Endothelial cell of umbilical vein (primary cell): ENCODE measurements at regions of chr3 and their contacts with region 1.

Region 1: GRCh38 chr3:177359593-177360357 is 162.5 kb upstream of the TBL1XR1 start:
- DNase-seq: peak; percentile 98
- H3K4me3 ChIP-seq: peak overlapping the region in 2 of 3 experiments; percentile 16 to 43
- H3K27ac ChIP-seq: peak overlapping the region; percentile 98
- H3K4me1 ChIP-seq: peaks cover 50% of the 10 kb centered on the region
- H3K27me3 ChIP-seq: no peaks in the 10 kb centered on the region
- CTCF ChIP-seq: no peak
- POLR2A ChIP-seq: no peak

Region 2: DNA sequence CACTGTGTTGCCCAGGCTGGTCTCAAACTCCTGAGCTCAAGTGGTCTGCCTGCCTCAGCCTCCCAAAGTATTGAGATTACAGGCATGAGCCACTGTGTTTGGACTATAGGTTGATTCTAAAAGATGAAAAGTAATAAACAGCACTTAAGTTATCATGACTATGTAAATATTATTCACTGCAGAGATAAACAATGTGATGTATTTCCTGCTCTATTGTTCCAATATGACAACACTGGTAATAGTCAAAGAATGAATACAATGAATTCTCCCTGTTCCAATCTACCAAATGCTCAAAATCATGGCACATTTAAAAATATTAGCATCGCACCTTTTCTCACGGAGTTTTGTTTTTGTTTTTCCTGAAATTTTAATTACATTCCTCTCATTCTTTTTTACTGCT is 125.7 kb before region 1 on chr3:
- CTCF ChIA-PET with region 1: no interaction called
- POLR2A ChIA-PET with region 1: no interaction called
- dilution Hi-C with region 1: no loop called
- intact Hi-C with region 1: loop called (anchors 1 kb)
- DNase-seq: peak; percentile 55
- H3K4me3 ChIP-seq: no peak overlapping the region
- H3K27ac ChIP-seq: peak overlapping the region; percentile 37
- H3K4me1 ChIP-seq: peaks cover 7% of the 10 kb centered on the region
- H3K27me3 ChIP-seq: no peaks in the 10 kb centered on the region
- CTCF ChIP-seq: no peak
- POLR2A ChIP-seq: no peak

Region 3: DNA sequence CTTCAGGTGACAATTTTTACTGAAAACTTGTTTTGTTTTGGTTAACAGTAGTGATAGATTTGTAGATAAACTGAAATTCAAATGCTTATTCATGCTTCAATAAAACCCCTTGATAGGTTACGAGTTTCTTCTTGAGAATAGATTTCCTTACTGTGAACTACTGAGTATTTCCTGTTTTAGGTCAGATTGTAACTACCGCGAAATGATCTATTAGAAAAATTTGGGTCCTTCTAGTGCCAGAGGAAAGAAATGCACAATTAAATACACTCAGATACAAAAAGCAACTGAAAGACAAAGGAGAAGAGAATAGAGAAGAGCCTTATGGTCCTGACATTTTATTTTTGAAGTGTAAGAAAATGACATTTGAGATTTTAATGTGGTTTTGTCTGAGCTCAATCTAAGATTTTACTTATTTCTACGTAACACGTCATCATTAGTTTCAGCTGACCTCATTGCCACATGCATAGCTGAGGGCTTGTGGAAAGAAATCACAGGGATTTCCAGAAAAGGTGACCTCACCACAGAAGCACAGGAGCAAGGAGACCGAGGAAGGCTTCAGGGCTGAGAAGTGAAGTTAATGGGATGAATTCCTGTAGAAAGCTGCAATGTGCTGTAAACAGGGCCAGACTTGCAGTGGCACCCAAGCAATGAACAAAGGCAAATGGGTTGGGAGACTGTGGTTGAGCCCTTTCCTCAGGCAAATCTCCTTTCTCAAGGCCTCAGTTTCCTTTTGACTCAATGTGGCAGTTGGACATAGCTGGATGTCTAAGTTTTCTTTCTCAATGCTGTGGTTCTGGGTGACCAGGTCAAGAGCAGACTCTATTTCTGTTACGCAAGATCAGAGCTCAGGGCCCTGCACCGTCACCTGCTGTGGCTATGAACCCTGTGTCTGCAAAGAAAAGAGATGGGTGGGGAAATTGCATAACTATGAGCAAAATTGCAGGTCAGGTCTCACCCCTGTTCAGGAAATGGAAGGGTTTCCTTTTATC is 89.5 kb after region 1 on chr3:
- CTCF ChIA-PET with region 1: no interaction called
- POLR2A ChIA-PET with region 1: no interaction called
- dilution Hi-C with region 1: no loop called
- intact Hi-C with region 1: loop called (anchors 1 kb)
- DNase-seq: no peak
- H3K4me3 ChIP-seq: no peak overlapping the region
- H3K27ac ChIP-seq: no peak overlapping the region
- H3K4me1 ChIP-seq: peaks cover 23% of the 10 kb centered on the region
- H3K27me3 ChIP-seq: no peaks in the 10 kb centered on the region
- CTCF ChIP-seq: no peak
- POLR2A ChIP-seq: no peak

Region 4: DNA sequence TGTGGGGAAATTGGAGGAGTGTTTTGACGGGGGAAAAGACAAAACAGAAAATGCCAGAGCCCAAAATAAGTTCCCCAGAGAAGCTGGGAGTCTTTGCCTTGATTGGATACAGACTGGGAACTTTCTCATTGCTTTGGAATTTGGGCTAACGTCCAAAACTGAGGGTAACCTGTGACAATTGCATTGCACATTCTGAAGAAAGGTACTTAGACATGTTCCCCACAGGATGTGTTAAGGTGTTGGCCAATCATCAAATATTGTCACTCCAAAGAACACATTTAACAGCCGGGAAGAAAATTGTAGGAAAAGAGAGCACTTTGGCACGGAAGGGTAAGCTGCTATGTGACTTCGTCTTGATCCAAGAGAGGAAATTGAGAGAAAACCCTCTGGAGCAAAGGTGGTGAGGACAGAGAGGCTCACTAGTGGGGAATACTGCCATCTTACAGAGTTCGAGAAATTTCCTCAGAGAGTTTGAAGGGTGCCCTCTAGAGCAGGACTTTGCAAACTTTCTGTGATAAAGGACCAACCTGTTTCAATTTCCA is 457.0 kb after region 1 on chr3:
- CTCF ChIA-PET with region 1: interaction called, 3 read pairs
- POLR2A ChIA-PET with region 1: no interaction called
- dilution Hi-C with region 1: no loop called
- intact Hi-C with region 1: loop called (anchors 10 kb)
- DNase-seq: peak; percentile 62
- H3K4me3 ChIP-seq: no peak overlapping the region
- H3K27ac ChIP-seq: no peak overlapping the region
- H3K4me1 ChIP-seq: peaks cover 18% of the 10 kb centered on the region
- H3K27me3 ChIP-seq: no peaks in the 10 kb centered on the region
- CTCF ChIP-seq: no peak
- POLR2A ChIP-seq: no peak

Region 5: GRCh38 chr3:178170698-178171535 is 811.1 kb after region 1 on chr3:
- CTCF ChIA-PET with region 1: interaction called, 5 read pairs
- POLR2A ChIA-PET with region 1: no interaction called
- dilution Hi-C with region 1: no loop called
- intact Hi-C with region 1: loop called (anchors 1 kb)
- DNase-seq: peak; percentile 96
- H3K4me3 ChIP-seq: no peak overlapping the region
- H3K27ac ChIP-seq: peak overlapping the region; percentile 85
- H3K4me1 ChIP-seq: peaks cover 27% of the 10 kb centered on the region
- H3K27me3 ChIP-seq: no peaks in the 10 kb centered on the region
- CTCF ChIP-seq: no peak
- POLR2A ChIP-seq: peak; percentile 91

Region 6: GRCh38 chr3:178385280-178385952 is 1025.6 kb after region 1 on chr3:
- CTCF ChIA-PET with region 1: interaction called, 15 read pairs
- POLR2A ChIA-PET with region 1: no interaction called
- dilution Hi-C with region 1: no loop called
- intact Hi-C with region 1: loop called (anchors 1 kb)
- DNase-seq: peak; percentile 71
- H3K4me3 ChIP-seq: no peak overlapping the region
- H3K27ac ChIP-seq: no peak overlapping the region
- H3K4me1 ChIP-seq: peaks cover 35% of the 10 kb centered on the region
- H3K27me3 ChIP-seq: no peaks in the 10 kb centered on the region
- CTCF ChIP-seq: peak; percentile 53 to 77
- POLR2A ChIP-seq: no peak